Dorsolateral prefrontal cortex (tissue), 120 donors: ENCODE measurements at regions of chr4 and their contacts with region 1.

Region 1: DNA sequence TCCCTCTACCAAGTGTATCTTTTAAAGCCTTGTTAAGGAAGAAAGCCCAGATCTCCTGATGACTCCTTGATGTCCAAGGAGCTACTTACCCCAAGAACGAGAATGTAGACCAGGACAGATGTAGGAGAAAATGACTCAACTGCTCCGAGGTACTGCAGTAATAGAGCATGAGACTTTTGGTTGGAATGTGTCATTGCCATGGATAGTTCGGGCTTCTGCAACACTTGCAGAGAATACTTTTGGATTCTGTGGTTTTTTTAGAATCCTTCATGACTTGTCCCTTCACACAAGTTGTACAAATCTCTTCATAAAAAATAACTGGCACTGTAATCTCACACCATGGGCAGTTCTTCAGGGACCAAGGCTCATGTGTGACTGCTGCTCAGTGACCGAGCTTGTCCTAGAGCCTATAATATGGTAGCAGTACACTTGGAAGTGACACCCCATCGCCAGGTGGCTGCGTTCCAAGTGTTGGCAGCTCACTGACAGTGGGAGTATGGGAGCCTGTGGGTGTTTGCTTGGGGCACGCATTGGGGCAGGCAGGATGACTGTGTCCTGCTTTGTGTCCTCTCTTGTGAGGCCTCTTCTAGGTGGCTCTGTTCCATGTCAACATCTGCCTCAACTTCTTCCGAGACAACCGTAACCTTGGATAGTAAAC is 87.9 kb upstream of the WDR1 start:
- DNase-seq: peak in 1 of 10 donors; percentile 48
- H3K4me3 ChIP-seq: no peak overlapping the region
- H3K27ac ChIP-seq: no peak overlapping the region
- H3K27me3 ChIP-seq: peaks cover 0 to 7% (median 0%) of the 10 kb centered on the region in 45 donors
- CTCF ChIP-seq: no peak

Region 2: GRCh38 chr4:9880406-9881197 is 323.9 kb before region 1 on chr4:
- intact Hi-C with region 1: no loop called
- DNase-seq: no peak
- H3K4me3 ChIP-seq: no peak overlapping the region
- H3K27ac ChIP-seq: no peak overlapping the region
- H3K27me3 ChIP-seq: no peaks in the 10 kb centered on the region
- CTCF ChIP-seq: no peak

Region 3: DNA sequence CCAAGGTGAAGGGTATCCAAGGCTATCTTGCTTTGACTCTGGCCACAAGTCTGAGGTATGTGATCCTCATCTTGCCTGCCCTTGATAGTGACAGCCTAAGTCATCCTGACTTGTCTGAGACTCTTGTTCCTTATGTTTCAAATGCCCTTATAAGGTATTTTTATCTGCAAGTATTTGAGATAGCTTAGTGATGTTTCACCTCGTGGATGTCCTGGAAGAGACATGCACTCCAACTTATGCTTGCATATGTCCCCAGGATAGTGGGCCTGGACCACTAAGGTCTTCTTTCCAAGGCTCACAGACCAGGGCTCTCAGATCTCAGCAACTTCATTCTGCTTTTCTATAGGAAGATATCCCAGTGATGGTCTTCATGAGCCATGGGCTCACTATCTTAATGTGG is 32.6 kb after region 1 on chr4:
- intact Hi-C with region 1: loop called in 1 of 2 experiments (anchors 1 kb)
- DNase-seq: no peak
- H3K4me3 ChIP-seq: no peak overlapping the region
- H3K27ac ChIP-seq: no peak overlapping the region
- H3K27me3 ChIP-seq: peaks cover 0 to 8% (median 0%) of the 10 kb centered on the region in 45 donors
- CTCF ChIP-seq: no peak